Ovary (tissue), 10 donors: ENCODE measurements at regions of chr9 and their contacts with region 1.

Region 1: GRCh38 chr9:8486095-8486494 is 686.5 kb upstream of the DMAC1 start:
- DNase-seq: peak in 4 of 5 donors; percentile 9 to 42 (median 26)
- H3K4me3 ChIP-seq: no peak overlapping the region
- H3K27ac ChIP-seq: no peak overlapping the region
- H3K4me1 ChIP-seq: no peaks in the 10 kb centered on the region
- H3K27me3 ChIP-seq: no peaks in the 10 kb centered on the region
- CTCF ChIP-seq: no peak
- EP300 ChIP-seq: no peak
- POLR2A ChIP-seq: no peak

Region 2: DNA sequence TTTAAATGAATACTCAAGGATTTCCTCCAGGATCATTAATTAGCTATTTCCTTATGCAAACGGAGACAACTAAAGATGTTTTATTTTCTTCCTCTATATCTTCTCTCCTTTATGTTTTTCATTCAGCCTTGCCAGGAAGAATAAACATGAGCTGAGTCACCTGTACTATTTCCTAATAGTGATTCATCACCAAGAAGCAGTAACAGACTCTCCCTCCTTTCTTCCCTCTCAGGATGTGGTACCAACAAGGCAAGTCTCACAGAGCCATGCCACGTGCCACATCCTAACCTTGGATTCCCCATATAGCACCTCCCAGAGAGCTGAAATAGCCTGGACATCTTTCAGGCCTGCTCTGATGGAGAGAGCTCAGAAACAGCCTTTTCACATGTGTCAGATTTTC is 72.1 kb after region 1 on chr9:
- intact Hi-C with region 1: no loop called
- DNase-seq: no peak
- H3K4me3 ChIP-seq: no peak overlapping the region
- H3K27ac ChIP-seq: no peak overlapping the region
- H3K4me1 ChIP-seq: peaks cover 2% of the 10 kb centered on the region
- H3K27me3 ChIP-seq: no peaks in the 10 kb centered on the region
- CTCF ChIP-seq: no peak
- EP300 ChIP-seq: no peak
- POLR2A ChIP-seq: no peak

Region 3: GRCh38 chr9:8895861-8896224 is 409.7 kb after region 1 on chr9:
- intact Hi-C with region 1: loop called in 1 of 4 experiments (anchors 10 kb)
- DNase-seq: no peak
- H3K4me3 ChIP-seq: no peak overlapping the region
- H3K27ac ChIP-seq: no peak overlapping the region
- H3K4me1 ChIP-seq: peaks cover 1% of the 10 kb centered on the region
- H3K27me3 ChIP-seq: no peaks in the 10 kb centered on the region
- CTCF ChIP-seq: peak; percentile 38 to 68 (median 63)
- EP300 ChIP-seq: no peak
- POLR2A ChIP-seq: no peak